Mammary epithelial cell (primary cell): ENCODE measurements at regions of chr1 and their contacts with region 1.

Region 1: DNA sequence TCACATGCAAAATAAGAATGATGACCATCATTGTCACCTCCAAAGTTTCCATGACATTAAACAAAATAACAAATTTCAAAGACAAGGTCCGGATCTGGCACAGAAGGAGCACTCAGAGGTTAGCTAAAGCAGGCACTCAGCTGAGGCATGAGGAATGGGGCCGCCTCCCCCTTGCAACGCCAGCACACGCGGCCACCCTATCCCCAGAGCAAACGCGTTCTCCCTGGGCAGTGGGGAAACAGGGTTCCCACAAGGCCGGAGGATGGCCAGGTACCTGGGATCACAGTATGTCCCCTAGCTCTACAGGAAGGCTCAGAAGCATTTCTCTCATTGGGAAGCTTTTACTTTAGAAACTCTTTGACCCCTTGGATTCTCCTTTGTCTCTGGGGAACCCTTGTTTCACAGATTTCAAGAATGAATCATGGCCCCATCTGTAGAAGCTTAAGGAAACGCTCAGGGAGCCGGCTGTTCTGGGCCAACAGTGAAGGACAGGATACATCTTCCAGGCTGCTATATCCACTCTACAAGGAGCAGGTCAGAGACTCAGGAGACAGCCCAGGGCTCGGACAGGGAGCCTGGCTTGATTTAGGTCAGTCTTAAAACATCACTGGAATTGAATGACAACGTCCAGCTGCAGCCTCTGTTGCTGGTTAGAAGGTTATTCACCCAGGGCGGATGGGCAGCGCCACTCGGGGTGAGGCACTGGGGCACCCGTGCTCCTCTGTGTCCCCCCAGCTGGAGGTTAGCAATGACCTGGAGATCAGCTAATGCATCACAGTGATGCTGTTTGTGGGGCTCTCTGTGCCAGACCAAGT is 496.4 kb downstream of the NPHP4 start:
- DNase-seq: no peak
- H3K4me3 ChIP-seq: no peak overlapping the region
- H3K27ac ChIP-seq: no peak overlapping the region
- H3K4me1 ChIP-seq: no peaks in the 10 kb centered on the region
- H3K27me3 ChIP-seq: no peaks in the 10 kb centered on the region
- CTCF ChIP-seq: no peak

Region 2: GRCh38 chr1:5579966-5580365 is 84.2 kb after region 1 on chr1:
- CTCF ChIA-PET with region 1: no interaction called
- dilution Hi-C with region 1: loop called (anchors 5 kb)
- in situ Hi-C with region 1: no loop called
- intact Hi-C with region 1: no loop called
- DNase-seq: no peak
- H3K4me3 ChIP-seq: no peak overlapping the region
- H3K27ac ChIP-seq: no peak overlapping the region
- H3K4me1 ChIP-seq: no peaks in the 10 kb centered on the region
- H3K27me3 ChIP-seq: no peaks in the 10 kb centered on the region
- CTCF ChIP-seq: no peak